Activated CD4-positive, alpha-beta T cell treated with anti-CD3 and anti-CD28 coated beads for 36 hours (primary cell): ENCODE measurements at regions of chr2 and their contacts with region 1.

Region 1: DNA sequence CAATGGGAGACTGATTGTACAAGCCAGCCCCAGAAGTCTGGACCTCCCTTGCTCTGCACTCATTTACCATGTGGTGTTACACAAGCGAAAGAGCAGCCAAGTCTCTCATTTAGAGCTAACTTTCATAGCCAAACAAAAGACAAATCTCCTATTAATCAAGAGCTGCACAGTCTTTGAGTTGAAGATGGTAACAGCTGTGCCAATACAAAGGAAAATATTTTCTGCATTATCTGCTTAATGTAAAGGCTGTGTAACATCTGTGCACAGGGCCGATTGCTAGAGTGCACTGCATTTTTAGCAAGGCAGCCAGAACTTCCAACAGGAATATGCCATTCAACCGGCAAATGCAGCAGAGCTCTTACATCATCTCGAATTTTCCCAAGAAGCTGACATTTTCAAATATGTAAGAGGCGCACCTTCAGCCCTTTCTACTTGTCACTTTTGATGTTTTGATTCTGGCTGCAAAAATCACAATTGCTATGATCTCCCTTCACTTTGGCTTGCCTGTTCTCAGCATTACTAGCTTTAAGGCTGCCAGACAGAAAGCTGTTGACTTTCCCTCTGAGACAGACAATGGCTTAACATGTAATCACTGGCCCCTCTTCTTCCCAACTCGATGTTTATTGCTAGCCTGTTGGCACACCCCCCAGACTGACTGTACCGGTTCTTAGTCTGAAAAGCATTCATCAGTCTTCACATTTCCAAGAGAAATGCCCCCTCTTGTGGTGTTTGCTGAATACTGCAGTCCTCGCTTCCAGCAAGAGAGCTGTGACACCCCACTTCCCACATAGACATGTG is 96.9 kb upstream of the TANK start:
- DNase-seq: peak; percentile 78
- ATAC-seq: peak; percentile 90
- H3K4me3 Mint-ChIP-seq: no peak overlapping the region
- H3K27ac Mint-ChIP-seq: no peak overlapping the region
- H3K4me1 Mint-ChIP-seq: peaks cover 7% of the 10 kb centered on the region
- H3K27me3 Mint-ChIP-seq: no peaks in the 10 kb centered on the region

Region 2: DNA sequence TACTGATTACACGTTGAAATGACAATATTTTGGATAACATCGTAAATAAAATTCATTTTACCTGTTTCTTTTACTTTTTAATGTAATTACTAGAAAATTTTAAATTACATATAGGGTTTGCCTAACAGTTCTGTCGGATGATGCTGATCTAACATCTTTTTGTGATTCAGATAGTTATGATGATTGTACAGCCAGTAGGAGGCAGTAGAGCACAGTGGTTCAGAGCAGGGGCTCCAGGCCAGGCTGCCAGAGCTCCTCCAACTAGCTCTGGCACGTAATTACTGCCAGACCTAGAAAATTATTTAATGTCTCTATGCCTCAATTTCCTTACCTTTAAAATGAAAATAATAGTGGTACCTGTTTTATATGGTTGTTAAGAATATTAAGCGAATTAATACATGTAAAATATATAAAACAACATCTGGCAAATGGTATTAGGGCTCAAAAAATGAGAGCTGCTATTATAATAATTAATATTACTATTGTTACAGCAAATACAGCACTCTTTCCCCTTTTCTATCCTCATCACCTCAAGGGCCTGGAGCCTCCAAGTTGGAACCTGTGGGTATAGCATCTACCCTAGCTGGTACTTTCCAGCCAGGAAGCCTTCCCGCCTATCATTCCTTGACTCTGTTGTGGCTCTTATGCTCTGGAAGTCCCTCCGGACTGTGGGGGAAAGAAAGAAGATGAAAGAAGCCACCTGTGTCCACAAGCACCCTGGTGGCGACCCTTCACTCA is 953.3 kb before region 1 on chr2:
- CTCF ChIA-PET with region 1: interaction called, 15 read pairs
- POLR2A ChIA-PET with region 1: no interaction called
- intact Hi-C with region 1: loop called in 1 of 2 experiments (anchors 2 kb)
- DNase-seq: peak; percentile 74
- ATAC-seq: peak; percentile 82
- H3K4me3 Mint-ChIP-seq: no peak overlapping the region
- H3K27ac Mint-ChIP-seq: no peak overlapping the region
- H3K4me1 Mint-ChIP-seq: no peaks in the 10 kb centered on the region
- H3K27me3 Mint-ChIP-seq: peaks cover 4% of the 10 kb centered on the region

Region 3: DNA sequence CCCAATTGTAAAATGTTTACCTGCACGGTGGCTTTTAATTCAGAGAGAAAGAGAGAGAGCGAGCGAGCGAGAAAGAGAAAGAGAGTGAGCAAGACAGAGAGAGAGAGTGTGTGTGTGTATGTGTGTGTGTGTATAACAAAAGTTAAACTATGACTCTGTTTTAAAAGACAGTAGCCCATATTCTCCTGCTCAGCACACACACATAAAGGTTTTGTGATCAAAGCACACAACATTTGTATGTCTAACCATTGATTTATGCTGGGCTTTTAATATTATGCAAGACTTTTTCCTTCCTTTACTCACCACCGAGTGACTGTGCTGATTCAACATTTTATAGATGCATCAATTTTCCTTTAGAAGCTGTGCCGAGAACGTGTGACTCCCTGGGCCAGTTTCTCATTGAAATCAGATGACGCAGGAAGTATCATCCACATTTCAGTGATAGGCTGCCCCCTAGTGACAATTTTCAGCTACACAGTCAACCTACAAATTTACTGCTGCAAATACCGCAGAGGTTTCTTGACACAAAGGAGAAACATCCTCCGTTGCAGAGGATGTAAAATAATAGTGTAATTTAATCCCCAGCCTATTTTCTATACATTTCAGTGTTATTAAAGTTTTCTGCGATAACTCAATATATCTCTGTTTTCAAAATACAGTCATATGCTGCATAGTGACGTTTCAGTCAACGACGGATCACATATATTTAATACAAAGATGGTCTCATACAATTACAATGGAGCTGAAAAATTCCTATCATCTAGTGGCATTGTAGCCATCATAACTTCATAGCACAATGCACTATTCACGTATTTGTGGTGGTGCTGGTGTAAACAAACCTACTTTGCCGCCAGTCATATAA is 69.0 kb before region 1 on chr2:
- CTCF ChIA-PET with region 1: interaction called, 21 read pairs
- POLR2A ChIA-PET with region 1: no interaction called
- intact Hi-C with region 1: no loop called
- DNase-seq: peak; percentile 79
- ATAC-seq: peak; percentile 94
- H3K4me3 Mint-ChIP-seq: no peak overlapping the region
- H3K27ac Mint-ChIP-seq: no peak overlapping the region
- H3K4me1 Mint-ChIP-seq: peaks cover 10% of the 10 kb centered on the region
- H3K27me3 Mint-ChIP-seq: no peaks in the 10 kb centered on the region

Region 4: GRCh38 chr2:161036926-161037325 is 26.4 kb before region 1 on chr2:
- CTCF ChIA-PET with region 1: interaction called, 19 read pairs
- POLR2A ChIA-PET with region 1: no interaction called
- intact Hi-C with region 1: no loop called
- DNase-seq: no peak
- ATAC-seq: no peak
- H3K4me3 Mint-ChIP-seq: no peak overlapping the region
- H3K27ac Mint-ChIP-seq: no peak overlapping the region
- H3K4me1 Mint-ChIP-seq: no peaks in the 10 kb centered on the region
- H3K27me3 Mint-ChIP-seq: peaks cover 5% of the 10 kb centered on the region

Region 5: GRCh38 chr2:161223139-161223732 is 159.9 kb after region 1 on chr2:
- CTCF ChIA-PET with region 1: interaction called, 14 read pairs
- POLR2A ChIA-PET with region 1: no interaction called
- intact Hi-C with region 1: no loop called
- DNase-seq: no peak
- ATAC-seq: peak; percentile 44
- H3K4me3 Mint-ChIP-seq: no peak overlapping the region
- H3K27ac Mint-ChIP-seq: no peak overlapping the region
- H3K4me1 Mint-ChIP-seq: no peaks in the 10 kb centered on the region
- H3K27me3 Mint-ChIP-seq: no peaks in the 10 kb centered on the region

Region 6: DNA sequence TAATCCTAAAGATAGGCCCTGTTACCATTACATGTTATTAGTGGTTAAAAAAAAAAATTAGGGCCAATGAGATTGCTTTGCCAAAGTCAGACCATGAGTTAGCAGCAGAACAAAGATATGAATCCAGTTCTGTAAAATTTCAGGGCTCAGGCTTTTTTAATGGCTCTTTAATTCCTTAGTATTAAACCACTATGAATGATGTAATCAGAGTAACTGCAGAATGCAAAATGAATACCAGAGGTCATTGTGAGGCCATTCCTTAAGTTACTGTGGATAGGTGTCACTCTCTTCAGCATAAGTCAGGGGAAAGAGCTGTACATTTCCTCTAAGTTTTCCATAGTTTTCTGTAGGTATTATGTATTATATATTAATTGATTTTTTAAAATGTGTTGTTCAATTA is 310.6 kb after region 1 on chr2:
- CTCF ChIA-PET with region 1: no interaction called
- POLR2A ChIA-PET with region 1: no interaction called
- intact Hi-C with region 1: no loop called
- DNase-seq: no peak
- ATAC-seq: no peak
- H3K4me3 Mint-ChIP-seq: no peak overlapping the region
- H3K27ac Mint-ChIP-seq: no peak overlapping the region
- H3K4me1 Mint-ChIP-seq: no peaks in the 10 kb centered on the region
- H3K27me3 Mint-ChIP-seq: no peaks in the 10 kb centered on the region